GM12878 (cell line): ENCODE measurements at regions of chr15 and their contacts with region 1.

Region 1: GRCh38 chr15:99213187-99213811 is 36.1 kb downstream of the TTC23 start:
- DNase-seq: peak; percentile 4
- ATAC-seq: peak; percentile 93
- H3K4me3 ChIP-seq: no peak overlapping the region
- H3K27ac ChIP-seq: no peak overlapping the region
- H3K4me1 ChIP-seq: no peaks in the 10 kb centered on the region
- H3K27me3 ChIP-seq: no peaks in the 10 kb centered on the region
- CTCF ChIP-seq: peak; percentile 83 to 92 (median 85)
- EP300 ChIP-seq: no peak
- POLR2A ChIP-seq: no peak
- RAD21 ChIP-seq: peak; percentile 94

Region 2: DNA sequence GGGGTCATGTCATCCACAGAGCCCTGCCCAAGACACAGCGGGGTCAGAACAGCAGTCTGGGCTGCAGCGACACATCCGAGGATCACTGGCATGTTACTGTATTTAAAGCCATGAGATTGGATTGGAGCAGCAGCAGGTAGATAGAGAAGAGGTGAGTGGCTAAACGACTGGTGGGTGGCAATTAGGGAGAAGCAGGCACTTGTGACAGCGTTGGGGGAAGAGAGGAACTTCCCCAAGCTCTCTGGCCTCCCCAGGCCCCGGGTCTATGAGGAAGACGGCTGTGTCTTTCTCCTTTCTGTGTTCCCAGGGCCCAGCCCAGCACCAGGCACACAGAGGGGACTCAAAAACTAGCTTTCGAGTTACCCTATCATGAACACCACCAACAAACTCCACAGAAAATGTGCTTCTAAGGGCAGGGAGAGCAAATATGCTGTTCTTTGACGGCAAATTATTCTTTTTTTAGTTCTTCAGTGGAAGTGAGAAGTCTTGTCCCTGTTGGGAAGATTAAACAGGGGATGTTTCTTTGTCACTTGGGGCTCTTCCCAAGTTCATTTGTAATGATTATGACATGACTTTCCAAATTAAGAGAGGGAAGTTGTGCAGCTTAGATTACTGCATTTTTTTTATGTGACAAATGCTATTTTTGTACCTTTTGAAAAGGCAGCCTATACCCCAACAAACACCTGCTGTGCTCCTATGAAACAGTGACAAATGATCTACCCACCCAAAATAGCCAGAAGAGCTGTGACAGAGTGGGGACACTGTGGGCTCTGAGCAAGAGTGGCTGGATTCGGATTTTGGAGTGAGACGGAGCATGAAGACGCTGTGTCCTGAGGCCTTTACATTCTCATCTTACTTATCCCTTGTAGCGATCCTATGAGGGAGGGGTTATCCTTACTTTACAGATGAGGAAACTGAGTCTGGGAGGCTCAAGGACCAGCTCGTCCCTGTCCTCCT is 115.6 kb before region 1 on chr15:
- CTCF ChIA-PET with region 1: interaction called, 111 read pairs
- POLR2A ChIA-PET with region 1: no interaction called
- RAD21 ChIA-PET with region 1: interaction called, 12 read pairs
- SMC1A ChIA-PET with region 1: interaction called, 45 read pairs
- in situ Hi-C with region 1: loop called (anchors 5 kb)
- intact Hi-C with region 1: loop called (anchors 1 kb)
- DNase-seq: no peak
- ATAC-seq: no peak
- H3K4me3 ChIP-seq: no peak overlapping the region
- H3K27ac ChIP-seq: no peak overlapping the region
- H3K4me1 ChIP-seq: no peaks in the 10 kb centered on the region
- H3K27me3 ChIP-seq: peaks cover 0 to 11% of the 10 kb centered on the region in 2 experiments; a peak in 2 of 4 replicates
- CTCF ChIP-seq: no peak
- EP300 ChIP-seq: no peak
- POLR2A ChIP-seq: no peak
- RAD21 ChIP-seq: no peak

Region 3: DNA sequence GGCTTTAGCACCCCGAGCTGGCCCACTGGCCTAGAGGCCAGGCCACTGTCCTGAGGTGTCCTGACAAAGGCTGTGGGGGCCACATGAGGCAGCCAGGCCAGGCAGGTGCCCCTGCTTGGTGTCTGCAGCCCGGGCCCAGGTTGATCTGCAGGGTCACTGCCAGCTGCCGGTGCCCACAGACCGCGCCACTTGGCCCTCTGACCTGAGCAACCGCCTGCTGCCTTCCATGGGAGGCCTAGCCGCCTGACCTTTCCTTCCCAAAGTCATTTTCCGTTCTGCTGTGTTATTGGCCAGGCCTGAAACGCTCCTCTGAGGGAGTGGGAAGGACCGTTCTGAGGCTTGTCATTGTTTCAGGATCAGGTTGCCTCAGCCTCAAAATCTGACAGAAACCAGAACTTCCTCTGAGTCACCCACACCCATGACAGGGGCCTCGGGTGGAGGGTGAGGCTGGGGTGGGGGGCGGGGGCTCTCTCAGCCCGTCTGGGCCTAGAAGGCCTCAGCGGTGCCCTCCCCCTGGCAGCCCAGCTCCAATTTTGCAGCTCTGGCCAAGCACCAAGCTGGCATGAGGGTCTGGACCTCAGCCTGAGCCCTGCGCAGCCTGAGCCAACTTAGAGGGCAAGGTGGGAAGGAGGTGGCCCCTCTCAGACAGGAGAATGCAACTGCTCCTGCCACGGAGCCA is 211.8 kb after region 1 on chr15:
- CTCF ChIA-PET with region 1: no interaction called
- POLR2A ChIA-PET with region 1: no interaction called
- RAD21 ChIA-PET with region 1: no interaction called
- SMC1A ChIA-PET with region 1: no interaction called
- in situ Hi-C with region 1: no loop called
- intact Hi-C with region 1: no loop called
- DNase-seq: no peak
- ATAC-seq: peak; percentile 89
- H3K4me3 ChIP-seq: no peak overlapping the region
- H3K27ac ChIP-seq: no peak overlapping the region
- H3K4me1 ChIP-seq: peaks cover 16% of the 10 kb centered on the region
- H3K27me3 ChIP-seq: no peaks in the 10 kb centered on the region; a peak in 2 of 4 replicates
- CTCF ChIP-seq: no peak
- EP300 ChIP-seq: no peak
- POLR2A ChIP-seq: no peak
- RAD21 ChIP-seq: no peak

Region 4: DNA sequence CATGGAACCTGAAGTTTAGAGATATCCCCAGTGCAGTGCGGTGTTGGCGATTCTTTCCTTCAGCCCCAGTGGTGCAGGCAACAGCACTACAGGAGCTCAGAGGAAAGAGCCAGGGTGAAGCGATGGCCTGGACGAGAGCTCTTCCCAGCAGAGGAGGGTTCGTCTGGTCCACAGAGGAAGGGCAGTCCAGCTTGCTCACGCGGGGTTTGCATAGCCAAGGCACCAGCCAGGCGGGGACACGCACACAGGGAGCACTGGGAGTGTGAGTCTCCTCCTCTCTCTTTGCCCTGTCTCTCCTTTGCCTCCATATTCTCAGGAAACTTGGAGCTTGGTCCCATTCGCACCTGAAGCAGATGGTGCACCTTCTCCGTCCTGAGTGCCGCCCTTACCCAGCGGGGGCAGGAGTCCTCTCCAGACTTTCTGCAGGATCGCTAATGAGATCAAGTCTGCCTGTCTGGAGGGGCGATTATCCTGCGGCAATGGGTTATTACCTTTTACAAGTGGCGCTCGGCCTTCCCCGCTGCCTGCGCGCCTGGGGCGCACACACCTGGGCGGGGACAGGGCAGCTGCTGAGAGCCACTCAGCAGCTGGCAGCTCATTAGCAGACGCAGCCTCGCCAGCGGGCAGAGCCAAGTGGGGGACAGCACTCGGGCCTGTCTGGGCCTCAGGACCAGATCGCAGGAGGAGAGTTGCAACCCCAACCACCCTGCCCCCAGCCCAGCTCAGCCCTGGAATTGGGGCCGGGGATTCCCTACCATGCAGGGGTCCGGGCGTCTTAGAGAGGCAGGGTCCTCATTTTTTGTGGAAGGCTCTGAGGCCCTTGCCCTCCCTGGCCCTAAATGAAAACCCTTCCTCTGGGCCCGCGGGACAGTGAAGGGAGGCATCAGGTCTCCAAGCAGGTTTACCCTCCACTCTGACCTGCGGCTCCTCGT is 233.5 kb after region 1 on chr15:
- CTCF ChIA-PET with region 1: no interaction called
- POLR2A ChIA-PET with region 1: no interaction called
- RAD21 ChIA-PET with region 1: no interaction called
- SMC1A ChIA-PET with region 1: no interaction called
- in situ Hi-C with region 1: no loop called
- intact Hi-C with region 1: no loop called
- DNase-seq: no peak
- ATAC-seq: no peak
- H3K4me3 ChIP-seq: no peak overlapping the region
- H3K27ac ChIP-seq: no peak overlapping the region
- H3K4me1 ChIP-seq: peaks cover 4% of the 10 kb centered on the region; the same call in 1 of the 2 replicates
- H3K27me3 ChIP-seq: no peaks in the 10 kb centered on the region
- CTCF ChIP-seq: no peak
- EP300 ChIP-seq: no peak
- POLR2A ChIP-seq: no peak
- RAD21 ChIP-seq: no peak